Sigmoid colon (tissue), 7 donors: ENCODE measurements at regions of chr7 and their contacts with region 1.

Region 1: GRCh38 chr7:113414401-113415035 is 296.2 kb upstream of the SMIM30 start:
- DNase-seq: no peak
- H3K4me3 ChIP-seq: no peak overlapping the region
- H3K27ac ChIP-seq: no peak overlapping the region
- H3K4me1 ChIP-seq: no peaks in the 10 kb centered on the region
- H3K27me3 ChIP-seq: no peaks in the 10 kb centered on the region
- CTCF ChIP-seq: no peak
- EP300 ChIP-seq: no peak
- POLR2A ChIP-seq: no peak

Region 2: DNA sequence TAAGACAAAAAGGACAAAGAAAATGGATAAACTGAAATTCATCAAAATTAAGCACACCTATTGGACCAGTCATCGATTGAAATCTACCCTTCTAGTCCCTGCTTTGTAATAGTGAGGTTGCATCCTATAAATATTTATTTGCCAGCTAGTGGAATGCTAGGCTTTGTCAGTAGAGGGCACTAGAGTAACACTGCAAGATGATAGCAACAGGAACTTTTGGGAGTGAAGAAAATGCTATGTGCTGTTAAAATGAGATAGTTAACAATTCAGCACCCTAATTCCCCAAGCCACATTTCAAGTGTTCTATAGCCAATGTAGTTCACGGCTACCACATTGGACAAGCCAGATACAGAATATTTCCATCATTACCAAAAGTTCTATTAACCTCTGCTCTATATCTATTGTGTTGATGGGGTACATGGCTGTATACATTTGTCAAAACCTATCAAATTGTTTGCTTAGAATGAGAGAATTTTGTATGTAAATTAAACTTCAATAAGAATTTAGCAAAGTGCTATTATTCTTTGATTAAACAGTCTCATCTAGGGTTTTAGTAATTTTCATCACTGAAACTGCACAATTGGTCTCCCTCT is 864.0 kb before region 1 on chr7:
- intact Hi-C with region 1: loop called (anchors 5 kb)
- DNase-seq: no peak
- H3K4me3 ChIP-seq: no peak overlapping the region
- H3K27ac ChIP-seq: no peak overlapping the region
- H3K4me1 ChIP-seq: no peaks in the 10 kb centered on the region
- H3K27me3 ChIP-seq: no peaks in the 10 kb centered on the region
- CTCF ChIP-seq: peak; percentile 50 to 87 (median 78)
- EP300 ChIP-seq: no peak
- POLR2A ChIP-seq: no peak

Region 3: DNA sequence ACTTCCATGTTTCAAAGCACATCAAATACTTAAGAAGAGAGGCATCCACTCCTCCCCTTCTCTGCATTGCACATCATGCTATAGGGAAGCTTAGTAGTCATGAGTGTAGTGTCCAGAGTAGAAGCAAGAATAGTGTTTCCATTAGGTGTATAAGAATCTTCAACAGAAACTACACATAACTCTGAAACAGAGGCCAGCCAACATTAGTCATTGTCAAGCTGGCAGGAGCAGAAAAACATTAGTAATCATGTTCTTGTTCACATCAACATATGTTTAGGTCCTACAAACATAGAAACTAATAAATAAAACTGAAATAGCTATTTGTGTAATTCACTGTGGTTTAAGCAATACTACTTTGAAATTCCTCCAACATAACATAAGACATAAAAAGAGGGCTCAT is 134.0 kb after region 1 on chr7:
- intact Hi-C with region 1: no loop called
- DNase-seq: no peak
- H3K4me3 ChIP-seq: no peak overlapping the region
- H3K27ac ChIP-seq: no peak overlapping the region
- H3K4me1 ChIP-seq: no peaks in the 10 kb centered on the region
- H3K27me3 ChIP-seq: no peaks in the 10 kb centered on the region
- CTCF ChIP-seq: no peak
- EP300 ChIP-seq: no peak
- POLR2A ChIP-seq: no peak